HEK293 (cell line): ENCODE measurements at regions of chr4 and their contacts with region 1.

Region 1: GRCh38 chr4:169024762-169025161 is 14.7 kb upstream of the CBR4 start:
- H3K4me3 ChIP-seq: no peak overlapping the region
- H3K27ac ChIP-seq: no peak overlapping the region
- H3K4me1 ChIP-seq: no peaks in the 10 kb centered on the region
- CTCF ChIP-seq: no peak

Region 2: GRCh38 chr4:169485791-169486742 is 461.3 kb after region 1 on chr4:
- CTCF ChIA-PET with region 1: interaction called, 10 read pairs
- POLR2A ChIA-PET with region 1: no interaction called
- H3K4me3 ChIP-seq: no peak overlapping the region
- H3K27ac ChIP-seq: no peak overlapping the region
- H3K4me1 ChIP-seq: 0 out of 2 replicates have a peak, but pooled peaks cover 2% of the 10 kb centered on the region
- CTCF ChIP-seq: no peak

Region 3: DNA sequence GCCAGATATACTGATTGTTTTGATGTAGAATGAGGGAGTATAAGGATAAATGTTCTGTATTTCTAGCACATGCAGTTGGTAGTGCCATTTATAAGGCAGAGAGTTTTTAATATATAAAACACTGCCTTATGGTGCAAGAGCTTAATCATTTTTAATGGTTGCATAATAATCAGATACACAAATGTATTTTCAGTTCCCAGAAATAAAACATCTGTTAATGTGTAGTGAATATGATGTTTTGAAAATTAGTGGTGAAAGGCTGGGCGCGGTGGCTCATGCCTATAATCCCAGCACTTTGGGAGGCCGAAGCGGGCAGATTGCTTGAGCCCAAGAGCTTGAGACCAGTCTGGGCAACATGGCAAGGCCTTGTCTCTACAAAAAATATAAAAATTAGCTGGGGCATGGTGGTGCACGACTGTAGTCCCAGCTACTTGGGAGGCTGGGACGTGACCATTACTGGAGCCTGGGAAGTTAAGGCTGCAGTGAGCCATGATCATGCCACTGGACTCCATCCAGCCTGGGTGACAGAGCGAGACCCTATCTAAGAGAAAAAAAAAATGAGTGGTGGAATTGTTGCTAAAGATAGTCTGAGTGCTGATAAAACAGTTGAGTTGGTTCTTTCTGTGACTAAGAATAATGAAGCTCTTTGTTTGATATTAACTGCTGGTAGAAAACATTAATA is 624.9 kb after region 1 on chr4:
- CTCF ChIA-PET with region 1: no interaction called
- POLR2A ChIA-PET with region 1: no interaction called
- H3K4me3 ChIP-seq: no peak overlapping the region
- H3K27ac ChIP-seq: no peak overlapping the region
- H3K4me1 ChIP-seq: no peaks in the 10 kb centered on the region
- CTCF ChIP-seq: no peak